ENCODE measurements at regions of chrX and their contacts with region 1.

Region 1: DNA sequence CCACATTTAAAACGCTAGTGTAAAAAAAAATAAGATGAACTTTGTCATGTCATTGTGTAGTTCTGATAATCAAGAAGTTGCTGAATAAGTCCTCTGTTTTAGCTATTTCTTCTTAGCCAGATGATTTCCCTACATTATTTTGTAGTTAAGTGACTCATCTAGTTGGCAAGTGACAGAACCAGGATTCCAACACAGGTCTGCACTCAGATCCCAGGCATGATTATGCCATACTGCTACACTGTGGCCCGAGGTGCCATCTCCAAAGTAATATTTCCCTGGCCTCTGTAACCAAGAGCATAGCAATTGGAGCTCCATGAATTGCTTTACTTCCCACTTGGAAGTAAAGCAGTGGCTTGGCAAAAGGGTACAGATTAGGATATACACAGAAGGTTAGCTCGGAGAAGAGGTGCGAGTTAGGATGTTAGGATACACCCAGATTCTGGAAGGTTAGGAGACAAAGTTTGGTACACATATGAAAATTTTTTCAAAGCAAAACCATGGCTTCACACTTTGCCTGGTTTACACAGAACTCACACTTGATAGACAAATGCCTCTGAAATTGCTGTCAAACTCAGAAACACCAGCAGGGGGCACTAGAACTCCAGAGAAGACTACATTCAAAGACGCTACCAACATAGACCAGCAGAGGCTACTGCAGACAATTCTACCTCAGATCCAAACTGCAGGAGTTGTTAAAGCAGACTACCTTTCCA is 41.4 kb downstream of the SRPX2 start:
- DNase-seq: peak; percentile 37
- H3K4me3 ChIP-seq: no peak overlapping the region
- H3K27ac ChIP-seq: no peak overlapping the region
- H3K27me3 ChIP-seq: no peaks in the 10 kb centered on the region
- CTCF ChIP-seq: peak; percentile 83

Region 2: GRCh38 chrX:100512471-100512870 is 173.0 kb before region 1 on chrX:
- CTCF ChIA-PET with region 1: interaction called, 10 read pairs
- POLR2A ChIA-PET with region 1: no interaction called
- DNase-seq: no peak
- H3K4me3 ChIP-seq: no peak overlapping the region
- H3K27ac ChIP-seq: no peak overlapping the region
- H3K27me3 ChIP-seq: no peaks in the 10 kb centered on the region
- CTCF ChIP-seq: peak; percentile 49

Measured in AG04450 (cell line).